Psoas muscle (tissue), 8 donors: ENCODE measurements at regions of chr6 and their contacts with region 1.

Region 1: GRCh38 chr6:56605435-56605834 is 37.3 kb downstream of the DST start:
- DNase-seq: no peak
- ATAC-seq: no peak
- H3K4me3 ChIP-seq: no peak overlapping the region
- H3K27ac ChIP-seq: no peak overlapping the region
- H3K4me1 ChIP-seq: no peaks in the 10 kb centered on the region
- H3K27me3 ChIP-seq: no peaks in the 10 kb centered on the region
- CTCF ChIP-seq: no peak

Region 2: DNA sequence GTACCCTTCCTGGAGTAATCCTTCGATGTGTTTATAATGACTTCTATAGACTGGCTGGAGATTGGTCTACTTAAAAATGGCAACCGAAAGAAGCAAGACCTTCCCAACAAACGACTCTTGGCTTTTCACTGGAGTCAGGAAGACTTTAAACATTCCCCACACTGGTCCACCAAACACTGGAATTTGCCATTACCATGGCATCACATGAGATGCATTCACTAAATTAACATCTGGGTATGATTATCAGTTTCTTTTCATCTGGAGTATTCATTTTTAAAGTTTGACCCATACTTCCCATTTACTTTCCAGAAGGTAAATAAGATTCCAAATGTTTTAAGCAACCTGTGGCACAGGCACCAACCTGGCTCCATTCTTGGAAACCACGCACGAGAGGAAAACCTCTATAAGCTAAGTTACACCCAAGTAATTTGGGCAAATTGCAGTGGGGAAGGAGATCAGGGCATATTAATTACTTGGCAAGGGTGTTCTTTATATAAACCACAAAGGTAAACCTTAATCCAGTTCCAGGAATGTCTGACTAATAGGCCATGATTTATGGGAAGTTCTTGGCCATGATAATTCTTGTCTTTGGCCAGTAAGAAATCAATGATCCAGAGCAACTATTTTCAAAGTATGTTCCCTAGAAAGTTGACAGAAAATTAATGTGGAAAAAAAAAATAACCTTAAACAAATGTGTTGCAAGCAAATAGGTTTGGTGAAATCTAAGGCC is 168.1 kb before region 1 on chr6:
- intact Hi-C with region 1: no loop called
- DNase-seq: no peak
- ATAC-seq: no peak
- H3K4me3 ChIP-seq: no peak overlapping the region
- H3K27ac ChIP-seq: no peak overlapping the region
- H3K4me1 ChIP-seq: no peaks in the 10 kb centered on the region
- H3K27me3 ChIP-seq: no peaks in the 10 kb centered on the region
- CTCF ChIP-seq: no peak

Region 3: DNA sequence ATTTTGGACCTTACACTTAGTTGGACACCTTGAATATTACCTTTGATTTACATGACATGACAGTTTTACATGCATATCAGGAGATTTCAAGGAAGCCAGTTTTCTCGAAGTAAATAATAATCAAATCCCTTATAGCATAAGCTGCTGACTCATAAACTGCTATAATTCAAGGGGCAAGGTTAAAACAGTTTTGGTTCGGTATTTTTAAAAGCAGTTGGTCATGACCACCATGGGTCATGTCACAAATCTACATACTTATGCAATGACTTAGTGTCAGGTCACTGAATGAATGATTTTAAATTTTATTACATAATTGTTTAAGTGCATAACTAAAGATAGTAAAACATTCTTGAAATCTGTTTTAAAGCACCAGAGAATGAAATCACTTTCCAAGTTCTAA is 120.8 kb before region 1 on chr6:
- intact Hi-C with region 1: loop called in 1 of 2 experiments (anchors 5 kb)
- DNase-seq: no peak
- ATAC-seq: no peak
- H3K4me3 ChIP-seq: no peak overlapping the region
- H3K27ac ChIP-seq: no peak overlapping the region
- H3K4me1 ChIP-seq: no peaks in the 10 kb centered on the region
- H3K27me3 ChIP-seq: no peaks in the 10 kb centered on the region
- CTCF ChIP-seq: no peak

Region 4: GRCh38 chr6:57147955-57148858 is 542.8 kb after region 1 on chr6:
- intact Hi-C with region 1: no loop called
- DNase-seq: no peak
- ATAC-seq: no peak
- H3K4me3 ChIP-seq: no peak overlapping the region
- H3K27ac ChIP-seq: no peak overlapping the region
- H3K4me1 ChIP-seq: no peaks in the 10 kb centered on the region
- H3K27me3 ChIP-seq: no peaks in the 10 kb centered on the region
- CTCF ChIP-seq: no peak